Endothelial cell of umbilical vein (primary cell): ENCODE measurements at regions of chr9 and their contacts with region 1.

Region 1: GRCh38 chr9:128322404-128323211 is at the starts of genes COQ4 and TRUB2:
- DNase-seq: peak; percentile 95
- H3K4me3 ChIP-seq: peak within 1 kb of the TSS; percentile 83 to 92 (median 83)
- H3K27ac ChIP-seq: peak within 1 kb of the TSS; percentile 56
- H3K4me1 ChIP-seq: peaks cover 12% of the 10 kb centered on the region
- H3K27me3 ChIP-seq: no peaks in the 10 kb centered on the region
- CTCF ChIP-seq: no peak
- POLR2A ChIP-seq: peak; percentile 72
- total RNA-seq, gene COQ4: 44.4 and 46.6 TPM in 2 replicates
- total RNA-seq, gene TRUB2: 35.4 and 39.3 TPM in 2 replicates

Region 2: DNA sequence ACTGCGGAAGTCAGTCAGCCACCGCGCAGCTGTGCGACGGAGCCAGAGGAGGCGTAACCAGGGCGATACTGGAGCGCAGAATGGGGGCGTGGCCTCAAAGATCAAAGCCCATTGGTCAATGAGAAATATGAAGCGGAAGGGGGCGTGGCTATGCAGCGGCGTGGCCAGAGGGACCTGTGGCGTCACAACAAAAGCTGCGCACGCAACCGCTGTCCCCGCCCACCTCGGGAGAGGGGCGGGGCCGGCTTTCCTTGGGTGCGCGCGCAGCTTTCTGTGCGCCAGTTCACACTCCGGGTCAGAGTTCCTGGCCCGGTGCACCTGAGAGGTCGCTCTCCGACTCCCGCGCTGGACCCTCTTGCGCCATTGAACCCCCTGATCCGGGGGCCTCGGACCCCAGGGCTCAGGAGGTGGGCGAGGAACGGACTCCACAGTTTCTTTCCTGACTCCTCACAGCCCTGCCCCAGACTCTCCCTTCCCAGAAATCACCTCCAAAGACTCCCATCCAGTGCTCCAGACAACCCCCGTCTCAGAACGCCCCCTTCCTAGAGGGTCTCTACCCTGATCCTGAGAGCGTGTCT is 46.5 kb before region 1 on chr9 and contains the starts of genes GOLGA2 and SWI5:
- CTCF ChIA-PET with region 1: no interaction called
- POLR2A ChIA-PET with region 1: no interaction called
- dilution Hi-C with region 1: no loop called
- intact Hi-C with region 1: loop called (anchors 1 kb)
- DNase-seq: peak; percentile 100
- H3K4me3 ChIP-seq: peak within 1 kb of the TSS; percentile 80 to 95 (median 81)
- H3K27ac ChIP-seq: peak within 1 kb of the TSS; percentile 89
- H3K4me1 ChIP-seq: peaks cover 27% of the 10 kb centered on the region
- H3K27me3 ChIP-seq: no peaks in the 10 kb centered on the region
- CTCF ChIP-seq: no peak
- POLR2A ChIP-seq: peak; percentile 89
- total RNA-seq, gene GOLGA2: 107 and 114 TPM in 2 replicates
- total RNA-seq, gene SWI5: 21.2 and 25.2 TPM in 2 replicates

Region 3: GRCh38 chr9:128304149-128304974 is 18.2 kb before region 1 on chr9:
- CTCF ChIA-PET with region 1: no interaction called
- POLR2A ChIA-PET with region 1: no interaction called
- dilution Hi-C with region 1: no loop called
- intact Hi-C with region 1: loop called (anchors 1 kb)
- DNase-seq: no peak
- H3K4me3 ChIP-seq: no peak overlapping the region
- H3K27ac ChIP-seq: no peak overlapping the region
- H3K4me1 ChIP-seq: peaks cover 6% of the 10 kb centered on the region
- H3K27me3 ChIP-seq: no peaks in the 10 kb centered on the region
- CTCF ChIP-seq: no peak
- POLR2A ChIP-seq: no peak

Region 4: DNA sequence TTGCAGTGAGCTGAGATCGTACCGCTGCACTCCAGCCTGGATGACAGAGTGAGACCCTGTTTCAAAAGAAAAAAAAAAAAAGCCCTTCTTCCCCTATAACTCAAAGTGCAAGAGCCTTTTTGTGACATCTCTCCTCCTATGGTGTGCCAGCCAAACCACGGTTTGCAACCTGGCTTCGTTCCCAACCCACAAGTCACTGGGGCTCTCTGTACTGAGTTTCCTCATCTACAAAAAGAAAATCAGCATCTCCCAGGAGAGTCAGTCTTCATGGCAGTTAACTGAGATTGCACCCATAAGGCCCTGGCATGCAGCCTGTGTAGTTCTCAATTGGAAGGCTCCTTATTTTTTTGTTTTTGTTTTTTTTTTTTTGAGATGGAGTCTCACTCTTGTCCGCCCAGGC is 148.0 kb after region 1 on chr9:
- CTCF ChIA-PET with region 1: no interaction called
- POLR2A ChIA-PET with region 1: no interaction called
- dilution Hi-C with region 1: no loop called
- intact Hi-C with region 1: no loop called
- DNase-seq: no peak
- H3K4me3 ChIP-seq: no peak overlapping the region
- H3K27ac ChIP-seq: no peak overlapping the region
- H3K4me1 ChIP-seq: no peaks in the 10 kb centered on the region
- H3K27me3 ChIP-seq: no peaks in the 10 kb centered on the region
- CTCF ChIP-seq: no peak
- POLR2A ChIP-seq: no peak